Activated naive CD4-positive, alpha-beta T cell treated with anti-CD3 and anti-CD28 coated beads, Interleukin-2, amount 10 ng/mL, durations not matched to agents 7 days and 5 days (primary cell): ENCODE measurements at regions of chr9 and their contacts with region 1.

Region 1: GRCh38 chr9:75185585-75186170 is 97.4 kb downstream of the OSTF1 start:
- DNase-seq: peak; percentile 62
- H3K4me3 Mint-ChIP-seq: no peak overlapping the region
- H3K27ac Mint-ChIP-seq: no peak overlapping the region
- H3K4me1 Mint-ChIP-seq: peaks cover 24% of the 10 kb centered on the region
- H3K27me3 Mint-ChIP-seq: peaks cover 4% of the 10 kb centered on the region

Region 2: GRCh38 chr9:74977287-74977686 is 208.4 kb before region 1 on chr9:
- CTCF ChIA-PET with region 1: no interaction called
- DNase-seq: no peak
- H3K4me3 Mint-ChIP-seq: no peak overlapping the region
- H3K27ac Mint-ChIP-seq: no peak overlapping the region
- H3K4me1 Mint-ChIP-seq: peaks cover 7% of the 10 kb centered on the region
- H3K27me3 Mint-ChIP-seq: no peaks in the 10 kb centered on the region

Region 3: GRCh38 chr9:75170898-75171360 is 14.7 kb before region 1 on chr9:
- CTCF ChIA-PET with region 1: interaction called, 22 read pairs
- DNase-seq: no peak
- H3K4me3 Mint-ChIP-seq: no peak overlapping the region
- H3K27ac Mint-ChIP-seq: peak overlapping the region; percentile 85
- H3K4me1 Mint-ChIP-seq: peaks cover 53% of the 10 kb centered on the region
- H3K27me3 Mint-ChIP-seq: no peaks in the 10 kb centered on the region